Tibial artery (tissue), 4 donors: ENCODE measurements at regions of chr1 and their contacts with region 1.

Region 1: GRCh38 chr1:117895482-117896114 is 33.8 kb downstream of the GDAP2 start:
- DNase-seq: peak; percentile 45 to 70
- H3K4me3 ChIP-seq: no peak overlapping the region
- H3K27ac ChIP-seq: no peak overlapping the region
- H3K4me1 ChIP-seq: no peaks in the 10 kb centered on the region
- H3K27me3 ChIP-seq: no peaks in the 10 kb centered on the region
- CTCF ChIP-seq: peak; percentile 75 to 79

Region 2: GRCh38 chr1:117534995-117535467 is 360.6 kb before region 1 on chr1:
- intact Hi-C with region 1: loop called (anchors 10 kb)
- DNase-seq: no peak
- H3K4me3 ChIP-seq: no peak overlapping the region
- H3K27ac ChIP-seq: no peak overlapping the region
- H3K4me1 ChIP-seq: no peaks in the 10 kb centered on the region
- H3K27me3 ChIP-seq: peaks cover 0 to 2% of the 10 kb centered on the region in 2 donors
- CTCF ChIP-seq: peak; percentile 63 to 73

Region 3: DNA sequence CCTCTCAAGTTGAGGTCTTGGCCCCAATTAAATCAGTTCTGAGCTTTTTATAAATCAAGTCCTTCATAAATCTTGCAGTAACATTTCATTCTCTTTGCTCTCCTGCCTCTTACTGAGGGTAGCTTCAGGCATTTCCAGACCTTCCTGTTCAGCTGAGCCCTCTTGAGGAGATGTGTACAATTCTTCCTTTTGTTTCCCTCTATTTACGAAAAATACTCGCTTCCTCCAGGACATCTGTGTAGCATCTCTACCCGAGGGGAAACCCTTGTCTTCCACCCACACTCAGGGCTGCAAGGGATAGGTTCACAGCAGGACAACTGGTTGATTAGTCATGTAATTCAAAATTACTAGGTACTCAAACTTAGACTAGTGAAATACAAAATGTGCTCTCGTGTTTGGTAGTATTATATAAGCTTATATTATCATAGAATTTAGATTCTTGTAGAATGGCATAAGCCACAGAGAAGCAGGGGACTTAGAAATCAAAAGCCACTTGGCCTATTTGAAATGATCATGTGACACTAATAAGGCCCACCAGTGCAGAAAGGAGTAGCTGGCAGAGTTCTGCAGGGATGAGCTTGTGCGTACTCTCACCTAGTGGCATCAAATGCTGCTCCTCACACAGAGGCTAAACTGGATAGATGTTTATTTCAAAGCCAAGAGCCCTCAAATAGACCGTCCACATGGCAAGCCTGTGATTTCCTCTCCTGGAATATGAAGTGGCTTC is 92.9 kb before region 1 on chr1:
- intact Hi-C with region 1: loop called (anchors 10 kb)
- DNase-seq: no peak
- H3K4me3 ChIP-seq: no peak overlapping the region
- H3K27ac ChIP-seq: no peak overlapping the region
- H3K4me1 ChIP-seq: no peaks in the 10 kb centered on the region
- H3K27me3 ChIP-seq: no peaks in the 10 kb centered on the region
- CTCF ChIP-seq: no peak

Region 4: DNA sequence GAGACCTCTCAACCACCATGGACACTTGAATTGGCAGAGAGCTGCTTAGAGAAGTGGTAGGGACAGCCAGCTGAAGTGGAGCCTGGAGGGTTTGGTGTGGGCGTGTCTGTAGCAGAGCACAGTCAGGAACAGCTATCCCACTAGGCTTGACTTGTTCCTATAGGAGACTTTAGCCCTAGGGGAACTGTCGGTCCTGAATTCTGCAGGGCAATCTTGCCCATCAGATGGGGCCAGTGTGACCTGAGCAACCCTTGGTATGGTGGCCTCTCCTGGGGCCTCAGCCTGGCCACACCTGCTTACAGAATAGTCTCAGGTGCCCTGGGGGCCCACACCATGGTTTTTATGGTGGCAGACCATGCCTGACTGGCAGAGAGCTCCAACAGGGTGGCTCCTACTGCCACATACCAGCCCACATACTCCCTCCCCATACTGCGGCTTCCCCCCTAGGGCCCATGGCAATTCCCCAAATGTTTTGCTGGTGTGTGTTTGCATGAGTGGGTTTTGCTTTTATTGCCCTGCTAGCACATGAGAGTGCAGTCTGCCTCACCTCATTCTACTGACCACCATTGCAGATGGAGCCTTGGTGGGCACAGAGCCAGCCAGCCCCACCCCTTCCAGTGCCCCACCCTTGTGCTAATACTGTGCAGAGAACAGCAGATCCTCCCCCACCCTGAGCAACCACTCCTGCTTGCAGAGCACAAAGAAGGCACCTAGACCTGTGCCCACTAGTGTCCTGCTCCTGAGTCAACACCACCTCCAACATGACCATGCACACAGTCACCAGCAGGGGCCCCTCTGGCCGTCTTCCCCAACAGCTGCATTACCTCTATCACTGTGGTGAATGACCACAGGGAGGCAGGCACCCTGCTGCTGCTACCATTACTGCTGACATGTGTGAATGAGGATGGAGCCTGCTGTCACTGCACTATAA is 53.1 kb before region 1 on chr1:
- intact Hi-C with region 1: no loop called
- DNase-seq: peak in 1 of 2 donors; percentile 48
- H3K4me3 ChIP-seq: no peak overlapping the region
- H3K27ac ChIP-seq: no peak overlapping the region
- H3K4me1 ChIP-seq: peaks cover 0 to 22% (median 9%) of the 10 kb centered on the region in 4 donors
- H3K27me3 ChIP-seq: no peaks in the 10 kb centered on the region
- CTCF ChIP-seq: no peak

Region 5: DNA sequence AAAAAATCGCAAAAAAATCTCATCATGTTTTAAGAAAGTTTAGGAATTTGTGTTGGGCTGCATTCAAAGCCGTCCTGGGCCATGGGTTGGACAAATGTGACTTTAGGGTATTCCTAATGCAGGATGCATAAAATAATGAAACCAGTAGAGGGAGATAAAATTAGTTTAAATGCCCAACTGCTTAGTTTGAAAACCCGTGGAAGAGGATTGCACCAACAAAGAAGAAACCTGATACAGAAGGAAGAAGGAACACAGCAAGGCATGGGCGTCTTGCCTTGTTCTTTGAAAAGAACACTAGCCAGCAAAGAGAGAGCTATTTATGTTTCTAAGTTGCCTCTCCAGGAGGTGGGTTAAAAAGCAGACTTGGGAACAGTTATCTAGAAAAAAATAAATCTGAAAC is 71.9 kb after region 1 on chr1:
- intact Hi-C with region 1: no loop called
- DNase-seq: no peak
- H3K4me3 ChIP-seq: no peak overlapping the region
- H3K27ac ChIP-seq: no peak overlapping the region
- H3K4me1 ChIP-seq: peaks cover 0 to 3% (median 0%) of the 10 kb centered on the region in 4 donors
- H3K27me3 ChIP-seq: no peaks in the 10 kb centered on the region
- CTCF ChIP-seq: no peak